Keratinocyte (primary cell): ENCODE measurements at regions of chr5 and their contacts with region 1.

Region 1: DNA sequence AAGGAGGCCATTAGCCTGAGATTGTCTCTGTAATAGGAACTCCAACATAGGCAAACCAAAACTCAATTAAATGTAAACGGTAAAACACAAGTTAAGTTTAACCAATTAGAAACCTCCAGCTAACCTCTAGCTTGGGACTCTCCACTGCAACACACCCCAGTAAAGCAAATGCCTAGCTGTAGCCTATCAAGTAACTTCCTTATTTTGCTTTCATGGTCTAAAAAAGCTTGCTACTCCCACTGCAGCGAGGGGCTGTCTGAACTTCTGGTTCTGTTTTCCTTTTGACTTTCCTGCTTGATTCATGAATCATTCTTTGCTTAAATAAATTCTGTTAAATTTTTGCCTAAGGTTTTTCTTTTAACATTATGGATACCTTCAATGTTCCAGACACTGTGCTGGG is 24.4 kb upstream of the C5orf46 start:
- DNase-seq: no peak
- H3K4me3 ChIP-seq: no peak overlapping the region
- H3K27ac ChIP-seq: no peak overlapping the region
- H3K4me1 ChIP-seq: no peaks in the 10 kb centered on the region
- H3K27me3 ChIP-seq: no peaks in the 10 kb centered on the region
- CTCF ChIP-seq: no peak

Region 2: DNA sequence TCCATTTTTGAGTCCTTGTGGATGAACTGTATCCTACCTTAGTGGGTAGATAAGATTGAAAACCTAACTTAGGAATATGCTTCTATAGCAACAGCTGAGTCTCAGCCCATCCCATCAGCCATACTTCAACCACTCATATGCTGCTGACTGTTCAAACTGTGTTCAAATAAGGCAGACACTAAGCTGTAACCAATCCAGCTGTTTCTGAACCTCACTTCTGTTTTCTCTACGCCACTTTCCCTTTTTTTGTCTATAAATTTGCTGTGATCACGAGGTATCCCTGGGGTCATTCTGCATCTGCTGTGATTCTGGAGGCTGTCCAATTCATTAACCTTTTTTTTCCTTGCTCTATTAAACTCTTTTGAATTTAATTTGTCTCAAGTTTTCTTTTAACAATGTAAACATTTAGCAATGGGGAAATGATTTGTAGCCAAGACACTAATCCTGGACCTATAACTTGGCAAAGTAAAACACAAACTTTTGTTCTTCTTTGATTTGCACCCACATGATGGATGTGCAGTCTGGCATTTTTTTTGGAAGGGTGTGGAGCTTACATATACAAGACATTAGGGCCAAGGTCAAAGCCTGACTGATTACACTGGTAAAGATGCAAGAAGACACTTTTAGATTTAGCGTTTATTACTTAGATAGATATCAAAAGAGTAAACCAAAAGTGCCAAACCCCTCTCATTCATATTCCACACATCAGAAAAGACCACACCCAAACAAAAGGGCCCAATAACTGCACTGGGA is 67.1 kb before region 1 on chr5:
- dilution Hi-C with region 1: loop called (anchors 5 kb)
- DNase-seq: no peak
- H3K4me3 ChIP-seq: no peak overlapping the region
- H3K27ac ChIP-seq: no peak overlapping the region
- H3K4me1 ChIP-seq: no peaks in the 10 kb centered on the region
- H3K27me3 ChIP-seq: no peaks in the 10 kb centered on the region
- CTCF ChIP-seq: no peak